PC-9 (cell line): ENCODE measurements at regions of chr5 and their contacts with region 1.

Region 1: DNA sequence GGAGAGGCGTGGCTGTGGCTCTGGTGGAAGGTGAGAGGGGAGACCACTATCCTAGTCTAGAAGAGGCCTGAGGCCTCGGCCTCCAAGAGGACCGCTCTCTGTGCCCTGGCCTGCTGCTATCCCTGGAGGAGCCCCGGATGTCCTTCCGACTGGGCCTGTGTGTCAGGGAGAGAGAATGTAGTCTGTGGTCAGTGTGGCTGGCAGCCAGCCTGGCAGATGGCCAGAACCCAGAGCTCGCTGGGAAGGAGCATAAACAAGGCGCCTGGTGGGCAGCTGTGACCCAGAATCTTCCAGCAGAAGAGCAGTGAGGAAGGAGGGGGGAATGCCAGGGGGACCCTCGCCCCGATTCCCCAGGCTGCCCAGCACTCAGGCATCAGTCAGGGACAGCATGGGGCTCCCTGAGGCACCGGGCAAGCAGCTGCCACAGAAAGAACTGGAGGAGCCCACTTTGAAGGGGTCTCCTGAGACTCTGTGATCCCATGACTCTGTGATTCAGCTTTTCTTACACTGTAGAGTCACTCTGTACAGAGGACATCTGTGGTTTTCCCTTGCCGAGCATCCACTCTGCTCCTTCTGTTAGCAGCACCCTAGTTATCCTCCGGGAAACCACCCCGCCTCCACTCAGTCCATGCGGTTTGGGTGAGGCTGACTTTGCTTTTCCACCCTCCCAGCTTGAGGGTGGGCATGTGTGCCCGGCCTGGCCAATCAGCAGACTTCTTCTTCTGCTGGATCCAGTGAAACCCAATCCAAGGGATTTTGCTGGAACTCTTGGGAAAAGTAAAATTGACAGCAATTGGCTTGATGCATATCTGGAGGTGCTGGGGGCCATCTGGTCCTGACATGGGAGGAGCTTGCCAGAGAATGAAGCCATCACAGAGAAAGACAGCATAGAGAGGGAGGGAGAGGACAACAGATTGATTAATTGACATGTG is 46.2 kb upstream of the PWWP2A start:
- DNase-seq: peak; percentile 91 to 96
- H3K4me3 ChIP-seq: peak overlapping the region; percentile 43; the same call in 1 of the 2 replicates
- H3K27ac ChIP-seq: peak overlapping the region; percentile 93
- H3K4me1 ChIP-seq: peaks cover 41% of the 10 kb centered on the region
- H3K27me3 ChIP-seq: no peaks in the 10 kb centered on the region
- CTCF ChIP-seq: no peak

Region 2: GRCh38 chr5:160155017-160155745 is 10.2 kb before region 1 on chr5:
- CTCF ChIA-PET with region 1: no interaction called
- POLR2A ChIA-PET with region 1: no interaction called
- intact Hi-C with region 1: loop called (anchors 1 kb)
- DNase-seq: peak; percentile 47 to 91
- H3K4me3 ChIP-seq: no peak overlapping the region
- H3K27ac ChIP-seq: no peak overlapping the region
- H3K4me1 ChIP-seq: peaks cover 16% of the 10 kb centered on the region
- H3K27me3 ChIP-seq: no peaks in the 10 kb centered on the region
- CTCF ChIP-seq: no peak

Region 3: GRCh38 chr5:160188142-160189015 is 23.0 kb after region 1 on chr5:
- CTCF ChIA-PET with region 1: interaction called, 3 read pairs
- POLR2A ChIA-PET with region 1: interaction called, 9 read pairs
- intact Hi-C with region 1: loop called (anchors 1 kb)
- DNase-seq: peak; percentile 78 to 92
- H3K4me3 ChIP-seq: peak overlapping the region; percentile 57; the same call in 1 of the 2 replicates
- H3K27ac ChIP-seq: 0 out of 2 replicates have a peak overlapping the region, but pooled peaks have one; percentile 29
- H3K4me1 ChIP-seq: 0 out of 2 replicates have a peak, but pooled peaks cover 12% of the 10 kb centered on the region
- H3K27me3 ChIP-seq: no peaks in the 10 kb centered on the region
- CTCF ChIP-seq: no peak

Region 4: DNA sequence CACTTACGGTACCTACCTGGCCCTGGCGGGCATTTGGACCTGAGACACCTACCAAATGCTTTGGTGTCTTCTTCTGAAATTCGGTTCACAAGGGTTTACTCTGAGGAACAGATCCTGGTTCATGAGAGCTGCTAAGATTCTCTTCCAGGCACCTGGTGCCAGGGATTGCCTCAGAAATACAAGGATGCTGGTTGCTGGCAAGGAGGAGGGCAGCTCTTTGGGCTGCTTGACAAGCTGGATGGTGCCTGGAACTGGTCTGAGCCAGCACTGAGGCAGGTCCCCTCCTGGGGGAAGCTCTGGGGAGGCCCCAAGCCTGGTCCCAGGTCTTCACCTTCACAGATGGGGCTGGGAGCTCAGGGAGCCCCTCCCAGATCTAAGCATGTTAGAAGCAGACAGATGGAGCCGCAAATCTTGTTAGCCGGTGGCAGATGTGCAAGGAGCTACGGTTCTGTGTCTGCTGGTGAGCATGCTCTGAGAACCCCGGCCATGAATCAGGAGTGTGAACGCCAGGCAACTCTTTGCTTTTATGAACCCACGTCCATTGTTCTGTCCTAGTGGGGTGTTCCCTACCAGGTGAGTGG is 80.2 kb after region 1 on chr5:
- CTCF ChIA-PET with region 1: interaction called, 11 read pairs
- POLR2A ChIA-PET with region 1: interaction called, 5 read pairs
- intact Hi-C with region 1: no loop called
- DNase-seq: no peak
- H3K4me3 ChIP-seq: no peak overlapping the region
- H3K27ac ChIP-seq: no peak overlapping the region
- H3K4me1 ChIP-seq: no peaks in the 10 kb centered on the region
- H3K27me3 ChIP-seq: no peaks in the 10 kb centered on the region
- CTCF ChIP-seq: no peak

Region 5: GRCh38 chr5:160260881-160261815 is 95.7 kb after region 1 on chr5:
- CTCF ChIA-PET with region 1: interaction called, 10 read pairs
- POLR2A ChIA-PET with region 1: no interaction called
- intact Hi-C with region 1: no loop called
- DNase-seq: peak; percentile 84 to 99
- H3K4me3 ChIP-seq: no peak overlapping the region
- H3K27ac ChIP-seq: peak overlapping the region; percentile 79
- H3K4me1 ChIP-seq: peaks cover 18% of the 10 kb centered on the region
- H3K27me3 ChIP-seq: no peaks in the 10 kb centered on the region
- CTCF ChIP-seq: no peak

Region 6: GRCh38 chr5:160324886-160325285 is 159.5 kb after region 1 on chr5:
- CTCF ChIA-PET with region 1: no interaction called
- POLR2A ChIA-PET with region 1: interaction called, 11 read pairs
- intact Hi-C with region 1: no loop called
- DNase-seq: no peak
- H3K4me3 ChIP-seq: no peak overlapping the region
- H3K27ac ChIP-seq: no peak overlapping the region
- H3K4me1 ChIP-seq: peaks cover 16% of the 10 kb centered on the region
- H3K27me3 ChIP-seq: no peaks in the 10 kb centered on the region
- CTCF ChIP-seq: no peak